Right ventricle myocardium inferior (tissue), 1 donor: ENCODE measurements at regions of chr2 and their contacts with region 1.

Region 1: DNA sequence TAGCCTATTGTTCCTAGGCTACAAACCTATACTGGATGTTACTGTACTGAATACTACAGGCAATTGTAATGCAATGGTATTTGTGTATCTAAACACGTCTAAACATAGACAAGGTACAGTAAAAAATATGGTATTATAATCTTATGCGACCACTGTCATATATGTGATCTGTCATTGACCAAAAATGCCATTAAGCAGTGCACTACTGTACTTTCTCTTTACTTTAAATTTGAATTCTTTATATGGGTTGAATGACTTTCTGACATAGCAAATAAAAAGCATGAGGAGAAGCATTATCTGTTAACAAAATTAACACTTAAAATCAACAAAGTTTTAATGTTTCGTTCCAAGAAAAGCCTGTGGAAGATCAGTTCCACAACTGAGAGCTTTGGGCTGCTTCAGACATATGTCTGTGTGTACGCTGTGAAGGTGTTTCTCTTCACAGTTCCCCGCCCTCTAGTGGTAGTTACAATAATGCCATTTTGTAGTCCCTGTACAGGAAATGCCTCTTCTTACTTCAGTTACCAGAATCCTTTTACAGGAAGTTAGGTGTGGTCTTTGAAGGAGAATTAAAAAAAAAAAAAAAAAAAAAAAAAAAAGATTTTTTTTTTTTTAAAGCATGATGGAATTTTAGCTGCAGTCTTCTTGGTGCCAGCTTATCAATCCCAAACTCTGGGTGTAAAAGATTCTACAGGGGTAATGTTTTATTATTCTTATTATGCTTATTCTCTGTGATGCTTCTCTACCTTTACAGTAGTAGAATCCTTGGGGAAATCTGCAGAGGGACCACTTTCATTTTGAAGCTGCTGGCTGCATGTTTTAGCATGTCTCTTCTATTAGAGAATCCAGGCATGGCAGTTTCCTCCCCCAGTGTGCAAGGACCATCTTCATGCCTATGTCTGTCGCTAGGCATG is 54.5 kb downstream of the SCN2A start:
- DNase-seq: no peak
- ATAC-seq: peak; percentile 98

Region 2: DNA sequence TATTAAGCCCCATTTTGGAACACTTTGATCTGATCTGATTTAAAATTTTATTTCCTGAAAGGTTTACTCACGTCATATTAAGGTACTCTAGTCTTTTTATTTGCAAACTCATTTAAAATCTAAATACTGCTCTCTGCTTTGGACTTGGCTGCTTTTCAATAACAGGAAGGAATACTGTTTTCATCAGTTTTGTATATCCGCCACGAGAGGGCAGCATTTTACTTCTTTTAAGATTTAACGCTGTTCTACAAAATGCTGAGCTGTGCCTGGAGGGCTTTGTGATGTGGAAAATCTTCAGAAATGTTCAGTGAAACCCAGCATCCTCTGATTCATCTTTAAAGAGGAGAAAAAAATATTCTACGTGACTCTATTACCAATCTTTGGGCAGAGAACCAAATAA is 300.9 kb before region 1 on chr2:
- intact Hi-C with region 1: loop called (anchors 5 kb)
- DNase-seq: no peak
- ATAC-seq: peak; percentile 60

Region 3: DNA sequence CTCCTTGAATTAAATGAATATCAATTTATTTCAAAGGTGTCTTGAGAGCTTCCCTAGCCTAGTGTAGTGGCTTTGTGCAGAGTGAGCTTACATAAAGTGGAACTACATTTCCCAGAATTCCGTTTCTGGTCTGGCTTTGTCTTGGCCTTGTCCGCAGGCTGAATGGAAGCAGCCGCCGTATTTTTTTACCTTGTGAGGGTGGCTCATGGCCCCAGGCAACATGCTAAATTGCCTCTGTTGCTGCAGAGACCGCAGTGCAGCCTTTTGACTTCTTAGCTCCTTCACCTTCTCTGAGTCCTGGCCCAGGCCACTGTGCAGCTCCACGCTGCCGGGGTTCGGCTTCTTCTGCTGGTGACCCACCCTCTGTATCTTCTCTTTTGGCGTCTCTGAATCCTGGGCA is 223.6 kb before region 1 on chr2:
- intact Hi-C with region 1: no loop called
- DNase-seq: no peak
- ATAC-seq: no peak

Region 4: DNA sequence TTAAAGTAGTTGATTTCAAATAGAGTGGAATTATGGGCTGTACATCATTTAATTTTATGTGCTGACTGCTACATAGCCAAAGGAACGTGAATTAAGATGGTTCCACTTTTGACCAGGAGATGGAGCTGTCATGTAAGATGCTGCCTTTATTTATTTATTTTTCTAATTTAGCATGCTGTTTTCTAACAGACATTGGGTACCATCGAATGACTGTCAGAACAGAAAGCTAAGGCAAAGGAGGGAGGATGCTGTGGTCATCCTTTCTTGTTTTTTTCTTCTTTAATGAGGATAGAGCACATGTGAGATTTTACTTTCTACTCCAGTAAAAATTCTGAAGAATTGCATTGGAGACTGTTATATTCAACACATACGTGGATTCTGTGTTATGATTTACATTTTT is 54.5 kb before region 1 on chr2 and contains the start of gene SCN2A:
- intact Hi-C with region 1: loop called (anchors 1 kb)
- DNase-seq: no peak
- ATAC-seq: no peak
- total RNA-seq, gene SCN2A: 0.16 TPM